ENCODE measurements at regions of chr15 and their contacts with region 1.

Region 1: GRCh38 chr15:41465822-41466421 is 27.8 kb upstream of the ITPKA start:
- DNase-seq: peak; percentile 62
- H3K4me3 ChIP-seq: no peak overlapping the region
- H3K27ac ChIP-seq: no peak overlapping the region
- H3K4me1 ChIP-seq: no peaks in the 10 kb centered on the region
- H3K27me3 ChIP-seq: no peaks in the 10 kb centered on the region
- CTCF ChIP-seq: peak; percentile 97
- EP300 ChIP-seq: no peak
- RAD21 ChIP-seq: peak; percentile 92

Region 2: GRCh38 chr15:41251411-41251810 is 214.5 kb before region 1 on chr15:
- CTCF ChIA-PET with region 1: no interaction called
- POLR2A ChIA-PET with region 1: no interaction called
- DNase-seq: no peak
- H3K4me3 ChIP-seq: no peak overlapping the region
- H3K27ac ChIP-seq: no peak overlapping the region
- H3K4me1 ChIP-seq: peaks cover 0 to 5% of the 10 kb centered on the region in 2 experiments; a peak in 1 of 4 replicates
- H3K27me3 ChIP-seq: no peaks in the 10 kb centered on the region
- CTCF ChIP-seq: no peak
- EP300 ChIP-seq: no peak
- RAD21 ChIP-seq: no peak

Region 3: DNA sequence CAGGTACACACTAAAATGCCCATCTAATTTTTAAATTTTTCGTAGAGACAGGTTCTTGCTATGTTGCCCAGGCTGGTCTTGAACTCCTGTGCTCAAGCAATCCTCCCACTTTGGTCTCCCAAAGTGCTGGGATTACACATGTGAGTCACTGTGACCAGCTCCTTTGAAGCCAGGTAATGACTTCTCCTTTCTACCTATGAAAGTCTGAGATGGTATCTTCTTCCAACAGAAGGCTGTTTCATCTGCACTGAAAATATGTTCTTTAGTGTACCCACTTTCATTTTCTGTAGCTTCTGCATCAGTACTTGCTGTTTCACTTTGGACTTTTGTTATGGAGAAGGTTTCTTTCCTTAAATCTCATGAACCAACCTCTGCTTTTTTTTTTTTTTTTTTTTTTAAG is 142.3 kb before region 1 on chr15:
- CTCF ChIA-PET with region 1: no interaction called
- POLR2A ChIA-PET with region 1: no interaction called
- DNase-seq: no peak
- H3K4me3 ChIP-seq: no peak overlapping the region
- H3K27ac ChIP-seq: no peak overlapping the region
- H3K4me1 ChIP-seq: no peaks in the 10 kb centered on the region
- H3K27me3 ChIP-seq: no peaks in the 10 kb centered on the region
- CTCF ChIP-seq: no peak
- EP300 ChIP-seq: no peak
- RAD21 ChIP-seq: no peak

Region 4: DNA sequence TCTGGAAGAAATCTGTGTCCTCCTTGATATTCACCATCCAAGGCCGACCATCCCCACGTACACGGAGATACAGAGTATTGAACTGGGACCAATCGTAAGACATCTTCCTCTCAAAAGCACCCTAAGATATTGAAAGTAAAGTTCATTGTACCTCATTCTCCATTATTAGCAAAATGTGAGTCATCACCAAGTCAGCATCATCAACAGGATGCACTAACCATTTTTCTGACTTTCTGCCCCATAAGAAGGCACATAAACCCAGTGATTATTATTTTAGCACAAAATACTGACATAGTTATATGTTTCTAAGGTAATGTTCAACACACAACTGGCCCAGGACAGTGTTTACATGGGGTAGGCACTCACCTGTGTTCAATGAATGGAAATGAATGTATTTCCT is 71.0 kb before region 1 on chr15:
- CTCF ChIA-PET with region 1: no interaction called
- POLR2A ChIA-PET with region 1: no interaction called
- DNase-seq: no peak
- H3K4me3 ChIP-seq: no peak overlapping the region
- H3K27ac ChIP-seq: no peak overlapping the region
- H3K4me1 ChIP-seq: no peaks in the 10 kb centered on the region
- H3K27me3 ChIP-seq: no peaks in the 10 kb centered on the region
- CTCF ChIP-seq: no peak
- EP300 ChIP-seq: no peak
- RAD21 ChIP-seq: no peak

Region 5: GRCh38 chr15:41476416-41477048 is 10.6 kb after region 1 on chr15:
- CTCF ChIA-PET with region 1: interaction called, 30 read pairs
- POLR2A ChIA-PET with region 1: interaction called, 3 read pairs
- DNase-seq: no peak
- H3K4me3 ChIP-seq: no peak overlapping the region
- H3K27ac ChIP-seq: peak overlapping the region in 1 of 2 experiments; percentile 16; a peak in 1 of 4 replicates
- H3K4me1 ChIP-seq: no peaks in the 10 kb centered on the region
- H3K27me3 ChIP-seq: no peaks in the 10 kb centered on the region
- CTCF ChIP-seq: no peak
- EP300 ChIP-seq: no peak
- RAD21 ChIP-seq: no peak

Region 6: GRCh38 chr15:41493205-41493901 is 27.4 kb after region 1 on chr15 and contains the start of gene ITPKA:
- CTCF ChIA-PET with region 1: interaction called, 10 read pairs
- POLR2A ChIA-PET with region 1: no interaction called
- DNase-seq: peak; percentile 93
- H3K4me3 ChIP-seq: peak within 1 kb of the TSS; percentile 56 to 74
- H3K27ac ChIP-seq: peak within 1 kb of the TSS; percentile 26 to 67
- H3K4me1 ChIP-seq: peaks cover 6% of the 10 kb centered on the region in 2 experiments; a peak in 3 of 4 replicates
- H3K27me3 ChIP-seq: no peaks in the 10 kb centered on the region
- CTCF ChIP-seq: no peak
- EP300 ChIP-seq: no peak
- RAD21 ChIP-seq: no peak
- polyA plus RNA-seq, gene ITPKA: 1.0 and 2.2 TPM in 2 replicates

Region 7: GRCh38 chr15:41597787-41598186 is 131.9 kb after region 1 on chr15:
- CTCF ChIA-PET with region 1: interaction called, 19 read pairs
- POLR2A ChIA-PET with region 1: no interaction called
- DNase-seq: no peak
- H3K4me3 ChIP-seq: no peak overlapping the region
- H3K27ac ChIP-seq: no peak overlapping the region
- H3K4me1 ChIP-seq: no peaks in the 10 kb centered on the region
- H3K27me3 ChIP-seq: no peaks in the 10 kb centered on the region; the same call in 1 of the 2 replicates
- CTCF ChIP-seq: no peak
- EP300 ChIP-seq: no peak
- RAD21 ChIP-seq: no peak